HCT116 (cell line): ENCODE measurements at regions of chr1 and their contacts with region 1.

Region 1: GRCh38 chr1:65309304-65310077 is at the start of gene DNAJC6:
- DNase-seq: no peak
- ATAC-seq: peak; percentile 92
- H3K4me3 ChIP-seq: peak within 1 kb of the TSS; percentile 34 to 53
- H3K27ac ChIP-seq: no peak within 1 kb of the TSS
- H3K4me1 ChIP-seq: peaks cover 0 to 13% of the 10 kb centered on the region in 2 experiments; a peak in 1 of 4 replicates
- H3K27me3 ChIP-seq: no peaks in the 10 kb centered on the region
- CTCF ChIP-seq: no peak
- POLR2A ChIP-seq: no peak
- RAD21 ChIP-seq: no peak
- total RNA-seq, gene DNAJC6: 9.0 TPM

Region 2: GRCh38 chr1:64965366-64966157 is 343.9 kb before region 1 on chr1:
- CTCF ChIA-PET with region 1: no interaction called
- POLR2A ChIA-PET with region 1: no interaction called
- RAD21 ChIA-PET with region 1: no interaction called
- intact Hi-C with region 1: no loop called
- DNase-seq: no peak
- ATAC-seq: peak; percentile 41
- H3K4me3 ChIP-seq: peak overlapping the region; percentile 82 to 90
- H3K27ac ChIP-seq: peak overlapping the region; percentile 82
- H3K4me1 ChIP-seq: peaks cover 8 to 18% of the 10 kb centered on the region in 2 experiments; a peak in 3 of 4 replicates
- H3K27me3 ChIP-seq: no peaks in the 10 kb centered on the region
- CTCF ChIP-seq: no peak
- POLR2A ChIP-seq: no peak
- RAD21 ChIP-seq: no peak

Region 3: DNA sequence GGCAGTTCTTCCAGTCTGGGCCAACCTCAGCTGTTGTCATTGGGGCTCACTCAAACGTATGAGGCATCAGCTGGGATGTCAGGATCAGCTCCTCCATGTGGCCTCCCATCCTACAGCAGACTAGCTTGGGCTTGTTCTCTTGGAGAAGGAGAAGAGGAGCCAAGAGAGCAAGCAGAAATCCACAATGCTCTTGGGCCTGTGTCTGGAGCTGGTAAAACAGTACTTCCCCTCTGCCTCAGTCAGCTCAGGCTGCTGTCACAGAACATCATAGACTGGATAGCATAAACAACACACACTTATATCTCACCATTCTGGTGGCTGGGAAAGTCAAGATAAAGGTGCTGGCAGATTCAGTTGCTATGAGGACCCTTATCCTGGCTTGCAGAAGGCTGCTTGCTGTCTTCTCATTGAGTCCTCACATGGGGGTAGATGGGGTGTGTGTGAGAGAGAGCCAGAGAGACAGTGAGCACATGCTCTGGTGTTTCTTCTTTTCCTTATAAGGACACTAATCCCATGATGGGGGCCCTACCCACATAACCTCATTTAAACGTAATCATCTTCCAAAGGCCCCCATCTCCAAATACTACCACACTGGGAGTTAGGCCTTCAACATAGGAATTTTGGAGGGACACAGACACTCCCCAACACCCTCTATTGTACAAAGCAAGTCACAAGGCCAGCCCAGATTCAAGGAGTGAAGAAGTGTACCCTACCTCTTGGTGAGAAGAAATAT is 16.5 kb before region 1 on chr1:
- CTCF ChIA-PET with region 1: no interaction called
- POLR2A ChIA-PET with region 1: no interaction called
- RAD21 ChIA-PET with region 1: no interaction called
- intact Hi-C with region 1: loop called (anchors 1 kb)
- DNase-seq: no peak
- ATAC-seq: no peak
- H3K4me3 ChIP-seq: no peak overlapping the region
- H3K27ac ChIP-seq: no peak overlapping the region
- H3K4me1 ChIP-seq: no peaks in the 10 kb centered on the region
- H3K27me3 ChIP-seq: no peaks in the 10 kb centered on the region
- CTCF ChIP-seq: no peak
- POLR2A ChIP-seq: no peak
- RAD21 ChIP-seq: no peak

Region 4: DNA sequence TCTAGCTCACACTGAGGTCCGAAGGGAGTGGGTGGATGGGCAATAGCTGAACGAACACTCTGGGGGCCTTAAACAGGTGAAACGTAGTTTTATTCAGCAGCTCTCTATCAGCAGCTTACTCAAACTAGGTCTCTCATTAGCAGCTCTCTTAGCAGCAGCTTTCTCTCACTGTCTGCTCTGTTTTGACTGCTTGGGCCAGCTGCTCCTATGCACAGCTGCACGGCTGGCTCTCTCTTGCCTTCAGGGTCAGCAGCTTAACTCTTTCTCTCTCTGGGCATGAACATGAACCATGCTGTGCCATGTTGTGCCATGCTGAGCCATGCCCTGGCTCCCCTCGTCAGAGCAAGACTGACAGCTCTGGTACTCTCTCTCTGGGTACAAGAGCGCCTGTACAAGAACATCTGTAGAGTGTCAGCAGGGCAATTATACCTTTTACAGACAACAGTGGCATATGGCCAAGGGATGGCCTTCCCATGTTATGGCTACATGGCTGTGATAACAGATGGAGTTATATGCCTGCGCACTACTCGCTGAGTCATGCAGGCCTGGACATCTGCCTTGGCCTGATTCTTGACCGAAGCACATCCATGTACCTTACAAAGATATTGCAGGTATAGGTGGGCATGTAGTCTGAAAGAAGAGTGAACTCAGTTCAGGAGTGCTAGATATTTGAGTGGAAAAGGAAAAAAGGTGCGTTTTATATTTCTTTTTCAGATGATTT is 263.4 kb after region 1 on chr1:
- CTCF ChIA-PET with region 1: no interaction called
- POLR2A ChIA-PET with region 1: no interaction called
- RAD21 ChIA-PET with region 1: no interaction called
- intact Hi-C with region 1: loop called (anchors 10 kb)
- DNase-seq: no peak
- ATAC-seq: no peak
- H3K4me3 ChIP-seq: no peak overlapping the region
- H3K27ac ChIP-seq: no peak overlapping the region
- H3K4me1 ChIP-seq: no peaks in the 10 kb centered on the region
- H3K27me3 ChIP-seq: no peaks in the 10 kb centered on the region
- CTCF ChIP-seq: no peak
- POLR2A ChIP-seq: no peak
- RAD21 ChIP-seq: no peak

Region 5: DNA sequence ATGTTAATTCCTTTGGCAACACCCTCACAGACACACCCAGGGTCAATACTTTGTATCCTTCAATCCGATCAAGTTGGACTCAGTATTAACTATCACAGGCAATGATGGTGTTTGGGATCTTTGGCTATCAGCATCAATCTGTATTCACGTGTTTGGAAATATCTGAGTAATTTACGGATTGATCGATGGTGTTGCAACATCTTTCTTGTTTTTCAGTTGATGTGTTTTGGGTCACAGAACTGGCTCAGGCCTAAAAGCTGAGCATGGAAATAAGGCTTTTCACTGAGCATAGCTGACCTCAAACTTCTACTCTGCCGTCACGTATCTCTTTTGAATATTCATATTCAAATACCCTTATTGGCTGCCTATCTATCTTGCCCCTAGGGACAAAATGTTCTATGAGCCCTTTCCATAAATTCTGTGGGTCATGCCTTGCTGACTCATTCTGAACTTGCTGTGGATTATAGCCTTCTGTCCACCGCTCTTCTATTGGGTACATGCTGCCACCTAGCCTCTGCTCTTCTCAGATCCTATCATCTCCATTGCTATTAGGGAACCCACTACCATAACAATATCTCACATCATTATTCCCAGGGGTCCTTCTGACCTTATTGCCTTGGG is 639.2 kb after region 1 on chr1:
- CTCF ChIA-PET with region 1: no interaction called
- POLR2A ChIA-PET with region 1: no interaction called
- RAD21 ChIA-PET with region 1: no interaction called
- intact Hi-C with region 1: no loop called
- DNase-seq: peak; percentile 7
- ATAC-seq: peak; percentile 66
- H3K4me3 ChIP-seq: no peak overlapping the region
- H3K27ac ChIP-seq: no peak overlapping the region
- H3K4me1 ChIP-seq: no peaks in the 10 kb centered on the region
- H3K27me3 ChIP-seq: no peaks in the 10 kb centered on the region
- CTCF ChIP-seq: peak; percentile 11 to 44 (median 28); a peak in 3 of 6 replicates
- POLR2A ChIP-seq: no peak
- RAD21 ChIP-seq: peak; percentile 69